GM12878 (cell line): ENCODE measurements at regions of chr16 and their contacts with region 1.

Region 1: DNA sequence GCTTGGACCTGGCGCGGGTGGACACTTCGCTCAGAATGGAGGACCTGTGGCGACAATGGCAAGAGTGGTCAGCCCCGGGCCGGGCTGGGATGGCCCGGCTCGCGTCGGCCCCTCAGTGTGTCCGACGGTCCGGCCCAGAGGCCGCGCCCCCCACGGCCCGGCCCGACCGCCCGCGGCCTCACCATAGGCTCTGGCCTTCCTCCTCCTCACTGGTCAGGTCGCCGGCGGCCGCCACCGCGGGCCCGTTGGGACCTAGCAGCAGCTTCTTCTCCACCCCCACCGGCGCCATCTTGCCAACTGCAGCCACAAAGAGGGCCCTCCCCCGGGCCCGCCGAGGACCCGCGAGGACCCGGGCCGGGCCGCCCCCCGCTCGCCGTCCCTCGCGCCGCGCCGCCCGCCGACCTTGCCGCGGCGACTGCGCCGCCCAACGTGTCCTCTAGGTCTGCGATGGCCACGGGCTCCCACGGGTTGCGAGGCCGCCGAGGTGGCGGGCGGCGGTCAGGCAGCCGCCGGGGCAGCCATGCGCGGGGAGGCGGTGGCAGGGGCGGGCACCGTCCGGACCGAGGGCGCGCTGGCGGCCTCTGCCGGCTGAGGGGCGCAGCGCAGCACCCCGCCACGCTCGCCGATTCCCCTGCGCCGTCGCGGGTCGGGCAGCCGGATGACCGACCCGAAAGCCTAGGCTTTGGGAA is at the start of gene DYNC1LI2:
- DNase-seq: no peak
- ATAC-seq: peak; percentile 79
- H3K4me3 ChIP-seq: peak within 1 kb of the TSS; percentile 84
- H3K27ac ChIP-seq: peak within 1 kb of the TSS; percentile 92
- H3K4me1 ChIP-seq: peaks cover 7% of the 10 kb centered on the region
- H3K27me3 ChIP-seq: peaks cover 0 to 3% of the 10 kb centered on the region in 2 experiments; a peak in 1 of 4 replicates
- CTCF ChIP-seq: peak; percentile 70 to 92 (median 72); a peak in 4 of 6 replicates
- EP300 ChIP-seq: no peak
- POLR2A ChIP-seq: peak; percentile 86
- RAD21 ChIP-seq: no peak
- polyA plus RNA-seq, gene DYNC1LI2: 6.0 to 8.3 TPM

Region 2: GRCh38 chr16:66147291-66147690 is 604.2 kb before region 1 on chr16:
- CTCF ChIA-PET with region 1: no interaction called
- POLR2A ChIA-PET with region 1: no interaction called
- RAD21 ChIA-PET with region 1: no interaction called
- SMC1A ChIA-PET with region 1: no interaction called
- in situ Hi-C with region 1: no loop called
- intact Hi-C with region 1: no loop called
- DNase-seq: no peak
- ATAC-seq: no peak
- H3K4me3 ChIP-seq: no peak overlapping the region
- H3K27ac ChIP-seq: no peak overlapping the region
- H3K4me1 ChIP-seq: no peaks in the 10 kb centered on the region
- H3K27me3 ChIP-seq: no peaks in the 10 kb centered on the region; a peak in 1 of 4 replicates
- CTCF ChIP-seq: no peak
- EP300 ChIP-seq: no peak
- POLR2A ChIP-seq: no peak
- RAD21 ChIP-seq: no peak

Region 3: GRCh38 chr16:66740010-66740409 is 11.4 kb before region 1 on chr16:
- CTCF ChIA-PET with region 1: interaction called, 43 read pairs
- POLR2A ChIA-PET with region 1: interaction called, 5 read pairs
- RAD21 ChIA-PET with region 1: interaction called, 3 read pairs
- SMC1A ChIA-PET with region 1: interaction called, 6 read pairs
- in situ Hi-C with region 1: no loop called
- intact Hi-C with region 1: no loop called
- DNase-seq: no peak
- ATAC-seq: peak; percentile 89
- H3K4me3 ChIP-seq: no peak overlapping the region
- H3K27ac ChIP-seq: no peak overlapping the region
- H3K4me1 ChIP-seq: no peaks in the 10 kb centered on the region
- H3K27me3 ChIP-seq: no peaks in the 10 kb centered on the region
- CTCF ChIP-seq: peak; percentile 47 to 56 (median 49)
- EP300 ChIP-seq: no peak
- POLR2A ChIP-seq: no peak
- RAD21 ChIP-seq: peak; percentile 32; the same call in 1 of the 2 replicates

Region 4: GRCh38 chr16:66924527-66925321 is 173.3 kb after region 1 on chr16:
- CTCF ChIA-PET with region 1: interaction called, 3 read pairs
- POLR2A ChIA-PET with region 1: no interaction called
- RAD21 ChIA-PET with region 1: no interaction called
- SMC1A ChIA-PET with region 1: no interaction called
- in situ Hi-C with region 1: no loop called
- intact Hi-C with region 1: loop called (anchors 5 kb)
- DNase-seq: no peak
- ATAC-seq: peak; percentile 72
- H3K4me3 ChIP-seq: peak overlapping the region; percentile 53
- H3K27ac ChIP-seq: no peak overlapping the region
- H3K4me1 ChIP-seq: peaks cover 29% of the 10 kb centered on the region
- H3K27me3 ChIP-seq: no peaks in the 10 kb centered on the region; a peak in 3 of 4 replicates
- CTCF ChIP-seq: peak; percentile 33 to 45 (median 34); a peak in 5 of 6 replicates
- EP300 ChIP-seq: no peak
- POLR2A ChIP-seq: no peak
- RAD21 ChIP-seq: no peak